SK-N-SH (cell line): ENCODE measurements at regions of chr6 and their contacts with region 1.

Region 1: DNA sequence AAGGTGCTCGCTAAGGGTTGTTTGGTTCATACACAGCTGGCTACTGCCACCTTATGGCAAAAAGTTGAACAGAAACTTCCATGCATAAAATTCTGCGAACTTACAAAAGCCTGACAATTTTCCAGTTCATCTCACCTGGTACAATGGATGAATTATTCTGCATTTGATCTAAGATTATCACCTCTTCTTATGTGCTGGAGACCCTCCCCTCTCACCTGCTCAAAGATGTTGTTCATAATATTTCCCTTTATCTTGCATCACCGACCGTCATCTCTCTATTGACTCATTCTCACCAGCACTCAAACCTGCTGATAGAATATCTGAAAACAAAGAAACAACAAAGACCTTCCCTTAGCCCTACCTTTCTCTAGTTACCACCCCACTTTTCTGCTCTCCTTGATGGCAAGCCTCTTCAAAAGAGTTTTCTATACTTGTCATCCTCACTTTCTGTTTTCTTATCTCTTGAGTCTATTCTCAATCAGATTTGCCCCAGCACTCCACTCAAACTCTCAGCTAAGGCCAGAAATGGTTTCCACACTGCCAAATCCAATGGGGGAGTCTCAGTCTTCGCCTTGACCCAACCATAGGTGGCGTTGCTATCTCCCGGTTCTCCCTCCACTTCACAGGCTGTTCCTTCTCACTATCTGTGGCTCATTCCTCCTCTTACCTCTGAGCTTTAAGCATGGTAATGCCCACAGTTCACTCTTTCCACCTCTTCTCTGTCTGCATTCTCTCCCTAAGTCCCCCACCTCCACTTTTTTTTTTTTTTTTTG is 25.8 kb downstream of the SNRNP48 start:
- DNase-seq: peak; percentile 41
- H3K4me3 ChIP-seq: peak overlapping the region in 1 of 2 experiments; percentile 20; a peak in 1 of 4 replicates
- H3K27ac ChIP-seq: no peak overlapping the region
- H3K4me1 ChIP-seq: no peaks in the 10 kb centered on the region
- H3K27me3 ChIP-seq: no peaks in the 10 kb centered on the region
- CTCF ChIP-seq: peak; percentile 86
- EP300 ChIP-seq: no peak
- RAD21 ChIP-seq: peak; percentile 90

Region 2: GRCh38 chr6:7367408-7367807 is 248.4 kb before region 1 on chr6:
- CTCF ChIA-PET with region 1: no interaction called
- POLR2A ChIA-PET with region 1: no interaction called
- DNase-seq: no peak
- H3K4me3 ChIP-seq: no peak overlapping the region
- H3K27ac ChIP-seq: no peak overlapping the region
- H3K4me1 ChIP-seq: no peaks in the 10 kb centered on the region
- H3K27me3 ChIP-seq: no peaks in the 10 kb centered on the region
- CTCF ChIP-seq: no peak
- EP300 ChIP-seq: no peak
- RAD21 ChIP-seq: no peak

Region 3: GRCh38 chr6:7604506-7604905 is 11.3 kb before region 1 on chr6:
- CTCF ChIA-PET with region 1: interaction called, 26 read pairs
- POLR2A ChIA-PET with region 1: interaction called, 3 read pairs
- DNase-seq: no peak
- H3K4me3 ChIP-seq: no peak overlapping the region
- H3K27ac ChIP-seq: no peak overlapping the region
- H3K4me1 ChIP-seq: no peaks in the 10 kb centered on the region
- H3K27me3 ChIP-seq: no peaks in the 10 kb centered on the region
- CTCF ChIP-seq: no peak
- EP300 ChIP-seq: no peak
- RAD21 ChIP-seq: no peak